Testis (tissue), 5 donors: ENCODE measurements at regions of chr1 and their contacts with region 1.

Region 1: DNA sequence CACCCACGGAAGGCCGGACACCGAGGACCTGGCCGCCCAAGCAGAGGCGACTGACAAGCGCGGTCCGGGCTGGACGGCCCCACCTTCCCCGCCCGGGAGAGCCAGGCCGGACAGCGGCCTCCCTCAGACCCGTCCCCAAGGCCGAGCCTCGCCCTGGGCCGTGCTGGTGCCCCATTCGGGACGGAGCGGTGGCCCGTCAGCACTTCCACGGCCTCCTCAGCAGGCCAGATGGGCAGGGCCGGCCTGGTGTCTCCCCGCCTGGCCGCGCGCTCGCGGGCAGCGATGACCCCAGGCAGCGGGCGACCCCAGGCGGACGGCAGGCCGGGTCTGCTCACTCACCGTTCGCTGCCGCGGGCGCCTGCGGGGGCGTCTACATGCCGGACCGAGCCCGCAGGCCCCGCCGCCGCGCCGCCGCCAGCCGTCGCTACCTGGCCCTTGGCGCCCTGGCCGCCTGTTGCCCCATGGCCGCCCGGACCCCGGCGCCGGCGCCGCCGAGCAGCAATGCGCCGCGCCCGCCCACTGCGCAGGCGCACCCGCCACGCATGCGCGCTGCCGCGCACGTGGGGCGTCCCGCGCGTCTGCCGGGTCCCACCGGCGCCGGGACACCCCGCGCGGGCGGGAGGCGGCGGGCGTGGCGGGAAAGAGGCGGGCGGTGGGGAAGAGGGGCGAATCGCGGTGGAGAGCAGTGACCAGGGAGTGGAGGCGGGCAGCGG is at the start of gene NADK:
- DNase-seq: peak; percentile 64
- H3K4me3 ChIP-seq: peak within 1 kb of the TSS; percentile 77 to 86
- H3K27ac ChIP-seq: peak within 1 kb of the TSS; percentile 83 to 91
- H3K4me1 ChIP-seq: peaks cover 74% of the 10 kb centered on the region
- H3K27me3 ChIP-seq: no peaks in the 10 kb centered on the region
- CTCF ChIP-seq: no peak
- POLR2A ChIP-seq: no peak
- total RNA-seq, gene NADK: 105 to 111 TPM

Region 2: GRCh38 chr1:1721201-1721600 is 56.9 kb before region 1 on chr1:
- intact Hi-C with region 1: no loop called
- DNase-seq: peak; percentile 1
- H3K4me3 ChIP-seq: no peak overlapping the region
- H3K27ac ChIP-seq: no peak overlapping the region
- H3K4me1 ChIP-seq: no peaks in the 10 kb centered on the region
- H3K27me3 ChIP-seq: no peaks in the 10 kb centered on the region
- CTCF ChIP-seq: no peak
- POLR2A ChIP-seq: no peak

Region 3: DNA sequence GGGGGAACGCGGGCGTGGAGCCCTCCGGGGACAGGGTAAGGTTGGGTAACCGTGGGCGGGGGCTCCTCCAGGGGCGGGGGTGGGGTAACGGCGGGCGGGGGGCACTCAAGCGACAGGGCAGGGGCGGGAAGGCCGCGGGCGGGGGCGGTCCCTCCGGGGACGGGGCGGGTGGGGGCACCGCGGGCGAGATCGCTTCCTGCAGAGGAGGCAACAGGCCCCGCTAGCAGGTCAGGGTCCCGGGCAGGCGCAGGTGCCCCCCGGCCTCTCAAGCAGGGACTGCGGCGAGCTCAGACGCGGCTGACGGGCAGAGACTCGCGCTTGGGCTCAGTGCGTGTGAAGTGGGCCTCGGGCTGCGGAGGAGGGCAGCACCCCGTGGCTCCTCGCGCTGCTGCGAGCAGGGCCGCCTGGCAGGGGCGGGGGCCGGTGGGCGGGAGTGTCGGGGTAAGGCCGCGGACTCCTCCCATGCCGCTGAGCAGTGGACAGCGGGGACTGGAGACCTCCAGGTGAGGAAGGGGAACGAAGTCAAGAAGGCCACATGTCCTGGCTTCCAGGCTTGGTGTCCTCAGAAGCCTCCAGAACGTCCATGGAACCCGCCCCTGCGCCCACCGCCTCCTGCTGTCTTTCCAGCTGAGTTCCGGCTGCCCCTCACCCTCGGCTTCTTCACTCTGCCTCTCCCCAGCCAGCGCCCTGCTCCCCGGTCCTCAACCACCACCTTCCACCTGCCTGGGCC is 113.4 kb after region 1 on chr1:
- intact Hi-C with region 1: no loop called
- DNase-seq: peak; percentile 83
- H3K4me3 ChIP-seq: peak overlapping the region; percentile 86
- H3K27ac ChIP-seq: peak overlapping the region; percentile 91 to 96
- H3K4me1 ChIP-seq: peaks cover 47% of the 10 kb centered on the region
- H3K27me3 ChIP-seq: no peaks in the 10 kb centered on the region
- CTCF ChIP-seq: no peak
- POLR2A ChIP-seq: no peak

Region 4: DNA sequence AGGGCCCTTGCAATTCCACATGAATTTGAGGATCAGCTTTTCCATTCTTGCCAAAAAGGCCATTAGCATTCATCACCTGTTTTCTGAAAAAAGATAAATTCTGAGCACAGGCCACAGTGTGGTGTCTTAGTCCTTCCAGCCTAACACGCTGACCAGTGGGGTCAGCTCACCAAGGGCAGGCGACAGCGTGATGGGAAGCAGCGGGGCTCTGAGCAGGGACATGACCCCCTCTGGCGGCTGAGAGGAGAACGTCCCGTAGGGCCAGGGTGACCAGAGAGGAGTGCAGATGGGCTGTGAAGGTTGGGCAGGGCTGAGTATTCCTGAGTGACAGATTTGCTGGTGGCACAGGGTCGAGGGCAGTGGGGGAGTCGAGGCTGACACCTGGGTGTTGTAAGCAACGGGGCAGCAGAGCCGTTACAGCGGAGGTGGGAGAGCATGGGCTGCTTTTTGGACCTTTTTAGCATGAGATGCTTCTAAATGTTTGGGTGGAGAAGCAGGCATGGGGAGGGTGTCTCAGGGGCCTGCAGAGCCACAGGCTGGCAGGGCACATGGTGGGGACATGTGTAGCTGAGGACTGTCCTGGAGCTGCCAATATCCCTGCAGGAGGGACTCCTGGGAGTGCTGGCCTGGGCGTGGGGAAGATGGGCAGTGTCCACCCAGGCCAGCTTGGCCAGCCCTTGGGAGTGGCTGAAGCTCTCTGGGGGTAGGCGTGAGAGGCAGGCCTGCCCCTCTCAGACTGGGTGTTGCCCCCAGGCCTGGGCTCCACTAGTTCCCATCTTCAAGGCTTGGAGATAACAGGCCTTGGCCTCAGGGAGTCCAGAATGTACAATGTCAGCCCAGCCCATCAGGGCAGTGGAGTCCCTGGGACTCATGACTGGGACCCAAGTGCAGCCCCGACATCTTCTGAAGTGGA is 128.3 kb after region 1 on chr1:
- intact Hi-C with region 1: loop called (anchors 10 kb)
- DNase-seq: peak; percentile 90
- H3K4me3 ChIP-seq: no peak overlapping the region
- H3K27ac ChIP-seq: no peak overlapping the region
- H3K4me1 ChIP-seq: peaks cover 11% of the 10 kb centered on the region
- H3K27me3 ChIP-seq: no peaks in the 10 kb centered on the region
- CTCF ChIP-seq: peak; percentile 74 to 91 (median 88)
- POLR2A ChIP-seq: no peak